Panc1 (cell line): ENCODE measurements at regions of chr1 and their contacts with region 1.

Region 1: GRCh38 chr1:32200226-32201010 is at the start of gene CCDC28B:
- DNase-seq: no peak
- ATAC-seq: peak; percentile 52
- H3K4me3 ChIP-seq: peak within 1 kb of the TSS; percentile 60 to 71
- H3K27ac ChIP-seq: peak within 1 kb of the TSS; percentile 81
- H3K4me1 ChIP-seq: peaks cover 55% of the 10 kb centered on the region
- H3K27me3 ChIP-seq: no peaks in the 10 kb centered on the region
- CTCF ChIP-seq: no peak
- total RNA-seq, gene CCDC28B: 10.8 TPM

Region 2: GRCh38 chr1:31587720-31588394 is 612.6 kb before region 1 on chr1:
- CTCF ChIA-PET with region 1: no interaction called
- POLR2A ChIA-PET with region 1: interaction called, 11 read pairs
- in situ Hi-C with region 1: no loop called
- intact Hi-C with region 1: no loop called
- DNase-seq: no peak
- ATAC-seq: peak; percentile 75
- H3K4me3 ChIP-seq: no peak overlapping the region
- H3K27ac ChIP-seq: peak overlapping the region; percentile 71
- H3K4me1 ChIP-seq: peaks cover 33% of the 10 kb centered on the region
- H3K27me3 ChIP-seq: no peaks in the 10 kb centered on the region
- CTCF ChIP-seq: peak; percentile 91

Region 3: DNA sequence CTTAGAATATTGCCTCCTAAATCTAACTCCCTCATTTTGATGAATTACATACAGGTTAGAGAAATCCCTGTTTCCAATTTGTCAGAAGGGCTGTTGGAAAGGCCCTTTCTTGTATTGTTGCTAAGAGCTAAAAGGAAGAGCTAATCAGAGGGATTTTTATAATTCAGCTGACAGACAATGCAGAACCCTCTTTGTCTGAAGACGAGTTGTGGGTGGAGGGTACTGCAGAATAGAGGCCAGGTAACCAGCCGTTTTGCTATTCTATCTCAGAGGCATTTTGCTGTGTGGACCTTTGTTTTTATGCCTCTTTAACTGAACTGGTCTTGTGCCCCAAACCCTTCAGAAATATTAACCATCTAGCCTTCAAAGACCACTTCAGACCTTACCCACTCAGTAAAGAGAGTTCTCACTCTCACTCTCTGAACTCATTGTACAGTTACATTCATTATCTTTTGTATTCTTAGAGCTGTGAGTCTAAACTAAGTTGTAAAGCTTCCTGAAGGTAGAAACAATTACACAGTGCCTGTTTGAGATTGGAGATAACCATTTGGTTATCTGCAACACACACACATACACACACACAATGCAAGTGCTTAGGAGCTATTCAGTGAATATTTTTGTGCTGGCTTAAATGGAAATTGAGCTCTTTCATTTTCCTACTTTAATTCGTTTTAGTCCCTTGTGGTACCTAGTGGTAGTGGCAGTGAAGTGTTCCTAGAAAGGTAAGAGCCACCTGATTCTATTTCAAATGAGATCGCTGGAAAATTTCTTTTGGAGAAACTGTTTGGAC is 72.8 kb before region 1 on chr1:
- CTCF ChIA-PET with region 1: no interaction called
- POLR2A ChIA-PET with region 1: no interaction called
- in situ Hi-C with region 1: no loop called
- intact Hi-C with region 1: no loop called
- DNase-seq: no peak
- ATAC-seq: no peak
- H3K4me3 ChIP-seq: no peak overlapping the region
- H3K27ac ChIP-seq: no peak overlapping the region
- H3K4me1 ChIP-seq: no peaks in the 10 kb centered on the region; the same call in 1 of the 2 replicates
- H3K27me3 ChIP-seq: no peaks in the 10 kb centered on the region
- CTCF ChIP-seq: no peak

Region 4: DNA sequence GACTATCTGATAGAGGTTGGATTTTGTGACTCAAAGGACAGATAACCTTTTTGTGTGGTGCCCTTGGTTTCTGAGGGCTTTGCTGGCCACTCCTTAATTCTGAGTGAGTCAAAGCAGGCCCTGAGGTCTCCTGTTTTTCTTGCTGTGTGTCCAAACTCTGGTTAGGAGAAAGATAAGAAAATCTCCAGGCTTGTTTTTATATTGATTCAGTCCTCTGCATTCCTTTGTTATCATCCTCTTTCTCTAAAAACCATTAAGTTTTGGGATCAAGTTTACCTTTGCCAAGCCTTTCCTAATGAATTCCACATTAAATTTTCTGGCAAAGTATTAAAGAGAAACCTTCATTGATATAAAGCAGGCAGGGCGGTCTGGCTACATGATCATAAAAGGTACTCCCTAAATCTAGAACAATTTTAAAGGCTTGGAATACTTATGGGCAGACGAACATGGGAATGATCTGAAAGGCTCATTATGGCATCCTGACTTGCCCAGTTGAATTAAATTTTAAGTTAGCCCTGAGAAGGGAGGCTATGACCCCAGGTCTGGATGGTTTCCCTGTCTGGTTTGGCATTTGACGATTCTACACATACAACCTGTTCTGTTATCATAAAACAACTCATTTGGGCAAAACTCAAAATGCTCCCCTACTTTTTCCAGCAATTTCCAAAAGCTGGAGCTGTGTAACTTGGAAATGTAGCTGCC is 285.3 kb after region 1 on chr1:
- CTCF ChIA-PET with region 1: no interaction called
- POLR2A ChIA-PET with region 1: no interaction called
- in situ Hi-C with region 1: no loop called
- intact Hi-C with region 1: no loop called
- DNase-seq: no peak
- ATAC-seq: no peak
- H3K4me3 ChIP-seq: no peak overlapping the region
- H3K27ac ChIP-seq: no peak overlapping the region
- H3K4me1 ChIP-seq: no peaks in the 10 kb centered on the region
- H3K27me3 ChIP-seq: no peaks in the 10 kb centered on the region; the same call in 1 of the 2 replicates
- CTCF ChIP-seq: no peak